ENCODE measurements at regions of chr6 and their contacts with region 1.

Region 1: DNA sequence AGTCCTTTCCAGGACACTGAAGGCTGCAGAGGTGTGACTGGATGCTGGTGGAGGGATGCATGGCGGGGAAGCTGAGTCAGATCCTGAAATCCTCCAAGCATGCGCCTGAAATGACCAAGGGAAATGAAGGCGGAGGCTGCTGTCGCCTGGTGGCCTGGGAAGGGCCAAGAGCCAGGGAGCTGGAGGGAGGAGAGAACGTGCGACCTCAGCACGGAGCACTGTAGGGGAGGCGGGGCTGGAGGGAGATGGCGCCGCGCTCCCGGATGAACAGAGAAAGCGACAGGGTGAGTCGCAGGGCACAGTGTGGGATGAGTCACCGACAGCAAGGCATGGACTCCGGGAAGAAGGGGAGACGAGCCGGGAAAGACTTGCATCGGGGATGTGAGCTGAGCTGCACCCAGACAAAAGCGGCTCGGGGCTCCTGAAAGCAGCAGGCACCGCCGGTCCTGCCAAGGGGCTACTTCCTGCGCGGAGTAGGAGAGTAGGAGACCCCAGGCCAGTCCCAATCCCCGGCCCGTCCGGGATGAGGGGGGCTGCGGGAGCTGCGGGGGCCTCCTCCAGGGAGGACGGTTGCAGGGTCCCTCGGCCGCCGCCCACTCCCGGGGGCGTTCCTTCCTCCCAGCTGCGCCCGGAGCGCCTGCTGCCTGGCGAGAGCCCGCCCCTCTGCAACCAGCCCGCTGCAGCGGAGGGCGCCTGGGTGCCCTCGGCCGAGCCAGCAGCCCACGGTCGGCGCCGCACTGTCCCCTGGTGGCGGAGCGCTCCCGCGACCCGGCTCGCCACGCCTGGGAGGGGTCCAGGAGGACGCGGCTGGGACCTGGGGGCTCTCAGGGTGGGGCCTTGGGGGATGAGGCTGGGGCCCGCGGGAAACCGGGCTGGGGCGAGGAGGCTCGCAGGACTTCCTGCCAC is 11.0 kb upstream of the NQO2 start:
- DNase-seq: peak in 1 of 2 donors; percentile 97
- H3K4me3 ChIP-seq: peak overlapping the region; percentile 72 to 88
- H3K27ac ChIP-seq: peak overlapping the region; percentile 96
- H3K4me1 ChIP-seq: peaks cover 15% of the 10 kb centered on the region
- H3K27me3 ChIP-seq: no peaks in the 10 kb centered on the region
- CTCF ChIP-seq: peak; percentile 38 to 92 (median 78)
- POLR2A ChIP-seq: peak in 1 of 2 donors; percentile 20

Region 2: GRCh38 chr6:2841264-2842138 is 147.2 kb before region 1 on chr6 and contains the start of gene SERPINB1:
- intact Hi-C with region 1: loop called (anchors 5 kb)
- DNase-seq: no peak
- H3K4me3 ChIP-seq: peak within 1 kb of the TSS; percentile 58 to 67
- H3K27ac ChIP-seq: peak within 1 kb of the TSS; percentile 92
- H3K4me1 ChIP-seq: peaks cover 34% of the 10 kb centered on the region
- H3K27me3 ChIP-seq: no peaks in the 10 kb centered on the region
- CTCF ChIP-seq: no peak
- POLR2A ChIP-seq: peak in 1 of 2 donors; percentile 56
- total RNA-seq, gene SERPINB1: 38.1 TPM

Region 3: GRCh38 chr6:2952557-2953095 is 36.1 kb before region 1 on chr6:
- intact Hi-C with region 1: loop called (anchors 5 kb)
- DNase-seq: no peak
- H3K4me3 ChIP-seq: peak overlapping the region in 1 of 2 donors; percentile 5
- H3K27ac ChIP-seq: peak overlapping the region; percentile 59
- H3K4me1 ChIP-seq: peaks cover 19% of the 10 kb centered on the region
- H3K27me3 ChIP-seq: no peaks in the 10 kb centered on the region
- CTCF ChIP-seq: peak; percentile 93 to 96 (median 94)
- POLR2A ChIP-seq: no peak

Measured in vagina (tissue), 2 donors.